GM10248 (cell line): ENCODE measurements at regions of chr22 and their contacts with region 1.

Region 1: GRCh38 chr22:25772288-25772687 is 30.3 kb downstream of the MYO18B start:
- DNase-seq: no peak
- CTCF ChIP-seq: no peak

Region 2: DNA sequence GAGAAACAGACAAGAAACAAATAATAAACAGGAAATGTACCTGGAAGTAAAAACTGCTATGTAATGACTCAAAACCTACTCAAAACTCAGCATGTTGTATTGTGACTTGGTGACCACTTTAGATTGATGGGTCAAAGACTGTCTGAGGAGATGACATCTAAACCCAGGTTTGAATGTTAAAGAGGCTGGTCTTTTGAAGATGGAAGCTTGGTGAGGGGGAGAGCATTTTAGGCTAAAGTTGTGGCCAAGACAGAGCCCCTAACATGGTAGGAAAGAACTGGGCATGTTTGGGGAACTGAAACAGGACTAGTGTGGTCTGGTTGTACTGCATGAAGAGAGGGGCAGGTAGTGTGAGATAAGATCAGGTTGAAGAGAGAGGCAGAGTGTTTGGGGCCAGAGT is 115.6 kb before region 1 on chr22:
- CTCF ChIA-PET with region 1: no interaction called
- POLR2A ChIA-PET with region 1: no interaction called
- DNase-seq: peak; percentile 49
- CTCF ChIP-seq: no peak

Region 3: GRCh38 chr22:25759825-25760231 is 12.5 kb before region 1 on chr22:
- CTCF ChIA-PET with region 1: interaction called, 32 read pairs
- POLR2A ChIA-PET with region 1: no interaction called
- DNase-seq: no peak
- CTCF ChIP-seq: no peak